Naive thymus-derived CD4-positive, alpha-beta T cell (primary cell): ENCODE measurements at regions of chr17 and their contacts with region 1.

Region 1: GRCh38 chr17:47733047-47733673 is at the start of gene TBX21:
- DNase-seq: peak; percentile 57 to 87 (median 76)
- ATAC-seq: peak; percentile 95
- H3K4me3 ChIP-seq: peak within 1 kb of the TSS; percentile 75
- H3K4me3 Mint-ChIP-seq: peak within 1 kb of the TSS; percentile 78 to 96 (median 87)
- H3K27ac ChIP-seq: no peak within 1 kb of the TSS
- H3K27ac Mint-ChIP-seq: peak within 1 kb of the TSS; percentile 10 to 94 (median 51)
- H3K4me1 ChIP-seq: peaks cover 17 to 43% of the 10 kb centered on the region in 2 donors
- H3K4me1 Mint-ChIP-seq: peaks cover 11 to 75% (median 25%) of the 10 kb centered on the region in 7 donors
- H3K27me3 ChIP-seq: no peaks in the 10 kb centered on the region
- H3K27me3 Mint-ChIP-seq: peaks cover 0 to 14% (median 5%) of the 10 kb centered on the region in 5 donors
- total RNA-seq, gene TBX21: 1.3 to 38.6 (median 4.5) TPM

Region 2: GRCh38 chr17:47663912-47664625 is 69.1 kb before region 1 on chr17:
- CTCF ChIA-PET with region 1: interaction called, 3 read pairs
- POLR2A ChIA-PET with region 1: no interaction called
- intact Hi-C with region 1: loop called in 1 of 2 experiments (anchors 5 kb)
- DNase-seq: peak; percentile 19 to 65 (median 56)
- ATAC-seq: peak; percentile 81
- H3K4me3 ChIP-seq: no peak overlapping the region
- H3K4me3 Mint-ChIP-seq: peak overlapping the region in 3 of 10 donors; percentile 1 to 38 (median 25)
- H3K27ac ChIP-seq: peak overlapping the region; percentile 5
- H3K27ac Mint-ChIP-seq: peak overlapping the region; percentile 25 to 92 (median 66)
- H3K4me1 ChIP-seq: peaks cover 8 to 15% of the 10 kb centered on the region in 2 donors
- H3K4me1 Mint-ChIP-seq: peaks cover 8 to 48% (median 22%) of the 10 kb centered on the region in 7 donors
- H3K27me3 ChIP-seq: no peaks in the 10 kb centered on the region
- H3K27me3 Mint-ChIP-seq: no peaks in the 10 kb centered on the region

Region 3: DNA sequence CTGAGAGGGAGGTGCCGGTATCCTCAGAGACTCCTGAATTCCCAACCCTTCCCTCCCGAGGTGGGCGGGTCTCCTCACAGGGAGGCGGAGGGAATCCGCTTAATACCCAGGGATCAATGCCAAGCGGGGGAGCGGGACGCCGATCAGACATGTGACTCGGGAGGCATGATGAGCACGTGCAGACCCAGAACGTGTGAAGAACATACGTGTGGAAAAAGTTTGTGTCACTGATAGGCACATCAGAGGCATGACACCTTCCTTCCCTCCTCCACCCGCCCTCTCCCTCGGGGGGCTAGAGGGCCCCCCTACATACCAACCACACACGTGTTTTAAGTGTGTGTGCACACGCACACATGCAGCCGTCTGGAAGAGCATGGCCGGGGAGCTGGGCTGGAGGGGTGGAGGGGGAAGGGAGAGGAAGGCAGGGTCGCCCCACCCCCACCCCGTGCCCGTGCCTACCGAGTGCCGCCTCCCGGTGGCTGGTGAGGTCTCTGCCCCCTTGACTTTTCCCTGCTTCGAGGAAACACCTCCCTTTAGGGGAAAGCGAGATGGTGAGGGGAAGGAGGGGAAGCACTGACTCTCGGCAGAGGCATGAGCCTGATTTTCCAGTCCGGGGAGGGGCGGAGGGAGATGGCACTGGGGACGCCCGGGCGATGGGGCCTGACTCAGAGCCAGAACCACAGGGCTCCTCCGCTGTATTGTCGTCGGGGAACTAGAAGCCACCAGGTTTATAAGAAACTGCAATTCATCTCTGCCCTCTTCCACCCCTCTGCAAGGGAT is 12.2 kb before region 1 on chr17:
- CTCF ChIA-PET with region 1: no interaction called
- POLR2A ChIA-PET with region 1: no interaction called
- intact Hi-C with region 1: loop called in 1 of 2 experiments (anchors 1 kb)
- DNase-seq: peak in 2 of 9 donors; percentile 69 to 93
- ATAC-seq: peak; percentile 69
- H3K4me3 ChIP-seq: peak overlapping the region; percentile 29
- H3K4me3 Mint-ChIP-seq: peak overlapping the region in 6 of 10 donors; percentile 53 to 64 (median 58)
- H3K27ac ChIP-seq: no peak overlapping the region
- H3K27ac Mint-ChIP-seq: peak overlapping the region in 5 of 9 donors; percentile 13 to 77 (median 70)
- H3K4me1 ChIP-seq: peaks cover 35 to 66% of the 10 kb centered on the region in 2 donors
- H3K4me1 Mint-ChIP-seq: peaks cover 18 to 74% (median 40%) of the 10 kb centered on the region in 7 donors
- H3K27me3 ChIP-seq: no peaks in the 10 kb centered on the region
- H3K27me3 Mint-ChIP-seq: peaks cover 0 to 7% (median under 1%) of the 10 kb centered on the region in 5 donors

Region 4: DNA sequence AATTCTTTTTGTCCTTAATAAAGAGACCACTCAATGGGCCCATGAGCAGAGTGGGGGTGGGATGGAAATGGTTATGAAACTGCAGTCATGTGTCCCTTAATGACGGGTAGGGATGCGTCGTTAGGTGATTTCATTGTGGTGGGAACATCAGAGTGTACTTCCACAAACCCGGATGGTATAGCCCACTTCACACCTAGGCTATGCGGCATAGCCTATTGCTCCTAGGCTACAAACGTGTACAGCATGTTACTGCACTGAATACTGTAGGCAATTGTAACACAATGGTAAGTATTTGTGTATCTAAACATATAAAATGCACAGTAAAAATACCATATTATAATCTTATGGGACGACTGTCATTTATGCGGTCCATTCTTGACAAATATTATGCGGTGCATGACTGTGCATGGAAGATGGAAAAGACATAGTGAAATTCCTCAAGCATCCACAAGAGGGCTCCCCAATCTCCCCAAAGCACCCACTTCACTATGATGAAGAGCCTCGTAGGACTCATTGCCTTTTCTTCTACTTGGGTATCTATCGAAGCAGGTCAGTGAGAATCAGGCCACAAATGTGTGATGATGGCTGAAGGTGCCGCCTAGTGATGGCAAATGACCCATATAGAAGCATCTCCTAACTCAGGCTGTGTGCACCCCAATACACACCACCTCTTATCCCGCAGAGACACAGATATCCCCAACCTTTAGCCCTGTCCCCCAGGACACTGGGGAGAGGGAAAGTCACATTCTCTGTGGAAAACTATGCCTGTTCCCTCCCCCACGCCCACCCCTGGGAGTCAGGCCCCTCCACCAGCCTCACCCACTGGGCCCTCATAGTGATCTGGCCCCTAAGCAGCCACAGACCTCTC is 43.4 kb after region 1 on chr17:
- CTCF ChIA-PET with region 1: no interaction called
- POLR2A ChIA-PET with region 1: no interaction called
- intact Hi-C with region 1: loop called in 1 of 2 experiments (anchors 1 kb)
- DNase-seq: peak in 7 of 9 donors; percentile 17 to 59 (median 41)
- ATAC-seq: peak; percentile 85
- H3K4me3 ChIP-seq: no peak overlapping the region
- H3K4me3 Mint-ChIP-seq: no peak overlapping the region
- H3K27ac ChIP-seq: no peak overlapping the region
- H3K27ac Mint-ChIP-seq: peak overlapping the region in 1 of 9 donors; percentile 38
- H3K4me1 ChIP-seq: no peaks in the 10 kb centered on the region
- H3K4me1 Mint-ChIP-seq: peaks cover 0 to 5% (median 0%) of the 10 kb centered on the region in 7 donors
- H3K27me3 ChIP-seq: peaks cover 0 to 11% of the 10 kb centered on the region in 2 donors
- H3K27me3 Mint-ChIP-seq: peaks cover 35 to 60% (median 45%) of the 10 kb centered on the region in 5 donors

Region 5: DNA sequence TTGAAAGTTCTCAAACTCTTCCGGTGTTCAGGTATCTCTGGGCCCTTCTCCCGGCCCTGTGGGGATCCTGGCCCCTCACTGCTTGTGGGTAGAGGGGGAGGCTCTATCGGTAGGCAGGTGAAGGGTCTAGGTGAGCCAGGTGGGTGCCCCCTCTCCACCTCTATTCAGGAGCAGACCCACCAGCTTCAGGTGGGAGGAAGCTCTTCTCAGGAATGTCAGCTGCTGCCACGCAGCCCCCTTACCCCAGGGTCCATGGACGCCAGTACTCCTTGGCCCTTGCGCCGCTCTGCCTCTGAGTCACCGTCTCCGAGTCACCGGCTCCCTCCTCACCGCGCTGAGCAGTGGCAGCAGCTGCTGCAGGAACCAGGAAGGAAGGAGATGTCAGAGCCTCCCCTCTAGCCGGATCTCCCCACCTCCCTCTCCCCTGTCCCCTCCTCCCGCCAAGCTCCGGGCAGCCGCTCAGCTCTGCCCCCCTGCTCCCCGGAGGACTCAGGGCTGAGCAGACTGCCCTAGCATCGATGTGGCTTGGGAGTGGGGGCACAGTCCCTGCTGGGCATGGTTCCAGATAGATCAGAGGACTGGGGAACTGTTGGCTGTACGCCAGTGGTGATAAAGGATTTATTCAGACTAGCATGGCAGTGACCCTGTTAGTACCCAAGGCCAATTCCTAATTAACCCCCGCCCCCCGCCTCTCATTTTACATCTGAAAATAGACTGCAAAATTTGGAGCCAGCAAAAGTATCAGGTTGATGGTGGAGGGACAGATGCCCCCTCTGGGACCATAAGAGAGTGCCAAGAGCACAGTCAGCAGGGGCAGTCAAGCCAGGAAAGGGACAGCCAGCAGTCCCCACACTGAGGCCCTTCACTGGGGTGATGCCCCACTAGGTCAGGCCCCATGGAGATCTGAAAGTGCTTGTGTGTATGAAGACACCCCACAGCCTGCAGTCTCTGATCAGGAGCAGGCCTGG is 88.5 kb after region 1 on chr17 and contains the start of gene OSBPL7:
- CTCF ChIA-PET with region 1: no interaction called
- POLR2A ChIA-PET with region 1: no interaction called
- intact Hi-C with region 1: loop called in 1 of 2 experiments (anchors 1 kb)
- DNase-seq: peak; percentile 44 to 71 (median 66)
- ATAC-seq: peak; percentile 96
- H3K4me3 ChIP-seq: peak within 1 kb of the TSS; percentile 78
- H3K4me3 Mint-ChIP-seq: peak within 1 kb of the TSS; percentile 96 to 99 (median 97)
- H3K27ac ChIP-seq: peak within 1 kb of the TSS; percentile 80
- H3K27ac Mint-ChIP-seq: peak within 1 kb of the TSS; percentile 86 to 96 (median 91)
- H3K4me1 ChIP-seq: peaks cover 5 to 23% of the 10 kb centered on the region in 2 donors
- H3K4me1 Mint-ChIP-seq: peaks cover 7 to 33% (median 24%) of the 10 kb centered on the region in 7 donors
- H3K27me3 ChIP-seq: no peaks in the 10 kb centered on the region
- H3K27me3 Mint-ChIP-seq: no peaks in the 10 kb centered on the region
- total RNA-seq, gene OSBPL7: 36.6 to 46.1 (median 41.4) TPM

Region 6: DNA sequence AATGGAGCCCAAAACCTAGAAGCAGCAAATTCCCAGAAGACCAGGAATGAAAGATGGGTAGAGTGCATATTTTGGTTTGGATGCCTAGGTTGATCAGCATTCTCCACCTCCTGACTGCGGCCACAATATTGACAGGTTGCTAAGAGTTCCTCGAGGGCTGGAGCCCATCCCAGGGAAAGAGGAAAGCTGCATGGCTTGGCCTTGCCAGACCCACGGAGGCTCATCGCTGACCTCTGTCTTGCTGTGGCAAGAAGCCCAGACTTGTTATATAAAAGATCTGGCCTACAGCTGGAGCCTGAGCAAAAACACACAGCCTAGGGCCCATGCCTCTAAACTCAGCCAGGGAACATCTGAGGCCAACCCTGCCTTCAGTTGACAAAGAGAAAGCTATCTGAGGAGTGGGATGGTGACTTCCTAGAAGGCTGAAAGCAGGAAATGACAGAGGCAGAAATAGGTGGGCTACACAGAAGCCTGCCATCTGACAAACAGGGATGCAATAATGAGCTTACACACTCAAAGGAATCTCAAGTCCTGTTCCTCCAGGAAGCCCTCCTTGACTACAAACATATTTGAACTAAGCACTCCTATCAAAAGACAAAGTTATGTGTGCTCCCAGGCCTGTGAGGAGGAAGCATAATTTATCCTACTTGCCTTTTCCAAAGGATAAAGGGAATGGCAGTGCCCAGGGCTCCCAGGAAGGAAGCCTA is 1997.1 kb after region 1 on chr17:
- CTCF ChIA-PET with region 1: no interaction called
- POLR2A ChIA-PET with region 1: no interaction called
- intact Hi-C with region 1: loop called in 1 of 2 experiments (anchors 5 kb)
- DNase-seq: no peak
- ATAC-seq: no peak
- H3K4me3 ChIP-seq: no peak overlapping the region
- H3K4me3 Mint-ChIP-seq: no peak overlapping the region
- H3K27ac ChIP-seq: peak overlapping the region; percentile 23
- H3K27ac Mint-ChIP-seq: peak overlapping the region in 3 of 9 donors; percentile 38 to 84 (median 52)
- H3K4me1 ChIP-seq: peaks cover 21 to 27% of the 10 kb centered on the region in 2 donors
- H3K4me1 Mint-ChIP-seq: peaks cover 35 to 71% (median 56%) of the 10 kb centered on the region in 7 donors
- H3K27me3 ChIP-seq: no peaks in the 10 kb centered on the region
- H3K27me3 Mint-ChIP-seq: no peaks in the 10 kb centered on the region